ENCODE measurements at regions of chr7 and their contacts with region 1.

Region 1: DNA sequence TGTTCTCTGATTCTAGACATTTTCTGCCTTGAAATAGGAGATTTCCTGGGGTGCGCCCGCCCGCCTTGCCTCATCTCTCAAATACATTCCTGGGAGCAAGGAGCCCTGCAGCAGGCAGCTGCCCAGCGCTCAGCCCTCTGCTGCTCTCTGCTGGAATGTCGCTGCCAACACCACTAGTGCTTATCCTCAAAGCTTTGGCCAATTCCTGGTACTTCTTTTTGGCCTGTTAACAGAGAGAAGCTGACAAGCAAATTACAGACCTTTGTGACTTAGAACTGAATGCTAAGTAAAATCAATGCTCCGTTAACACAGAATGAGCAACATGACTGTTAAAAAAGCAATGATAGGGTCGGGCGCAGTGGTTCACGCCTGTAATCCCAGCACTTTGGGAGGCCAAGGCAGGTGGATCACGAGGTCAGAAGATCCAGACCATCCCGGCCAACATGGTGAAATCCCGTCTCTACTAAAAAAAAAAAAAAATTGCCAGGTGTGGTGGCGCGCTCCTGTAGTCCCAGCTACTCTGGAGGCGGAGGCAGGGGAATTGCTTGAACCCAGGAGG is 41.9 kb upstream of the SYPL1 start:
- DNase-seq: peak; percentile 75 to 91 (median 82)
- ATAC-seq: peak; percentile 100
- H3K4me3 ChIP-seq: no peak overlapping the region
- H3K27ac ChIP-seq: no peak overlapping the region
- H3K4me1 ChIP-seq: peaks cover 0 to 9% of the 10 kb centered on the region in 2 donors
- H3K27me3 ChIP-seq: peaks cover 0 to 23% of the 10 kb centered on the region in 2 donors
- CTCF ChIP-seq: peak; percentile 88 to 89

Region 2: GRCh38 chr7:106056513-106057203 is 97.3 kb before region 1 on chr7:
- intact Hi-C with region 1: loop called (anchors 5 to 10 kb)
- DNase-seq: peak in 2 of 4 donors; percentile 62 to 80
- ATAC-seq: peak; percentile 95
- H3K4me3 ChIP-seq: no peak overlapping the region
- H3K27ac ChIP-seq: no peak overlapping the region
- H3K4me1 ChIP-seq: peaks cover 0 to 4% of the 10 kb centered on the region in 2 donors
- H3K27me3 ChIP-seq: no peaks in the 10 kb centered on the region
- CTCF ChIP-seq: peak; percentile 84 to 88